K562 (cell line): ENCODE measurements at regions of chr15 and their contacts with region 1.

Region 1: GRCh38 chr15:68806220-68807060 is 14.3 kb downstream of the ANP32A start:
- DNase-seq: no peak
- ATAC-seq: no peak; the same call in 2 of the 3 replicates
- H3K4me3 ChIP-seq: no peak overlapping the region
- H3K27ac ChIP-seq: no peak overlapping the region
- H3K4me1 ChIP-seq: peaks cover 10% of the 10 kb centered on the region in 2 experiments; a peak in 4 of 5 replicates
- H3K27me3 ChIP-seq: no peaks in the 10 kb centered on the region
- CTCF ChIP-seq: no peak
- EP300 ChIP-seq: no peak
- POLR2A ChIP-seq: no peak
- RAD21 ChIP-seq: no peak

Region 2: DNA sequence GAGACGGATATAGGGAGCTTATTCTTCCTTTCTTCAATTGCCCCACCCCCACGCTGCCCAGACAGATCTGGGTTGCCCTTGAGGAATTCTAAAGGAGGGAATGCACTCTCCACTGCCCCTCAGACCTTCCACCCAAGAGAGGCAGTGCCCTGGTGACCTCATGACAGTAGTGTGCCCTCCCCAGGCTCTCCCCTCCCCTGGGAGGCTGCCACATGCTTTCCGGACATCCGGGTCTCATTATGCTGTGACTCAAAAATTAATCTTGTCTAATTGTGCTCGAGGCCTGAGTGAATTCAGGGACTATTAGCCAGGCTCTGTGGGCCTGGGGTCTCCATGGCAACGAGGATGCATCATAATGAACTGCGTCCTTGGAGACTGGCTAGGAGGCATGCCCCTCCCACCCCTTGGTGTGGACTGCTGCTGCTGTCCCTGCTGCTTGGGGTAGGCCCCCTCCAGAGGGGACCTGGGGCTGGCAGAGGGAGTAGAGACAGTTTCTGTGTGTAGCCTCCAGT is 206.8 kb before region 1 on chr15:
- CTCF ChIA-PET with region 1: no interaction called
- POLR2A ChIA-PET with region 1: no interaction called
- in situ Hi-C with region 1: no loop called
- intact Hi-C with region 1: no loop called
- DNase-seq: no peak
- ATAC-seq: no peak
- H3K4me3 ChIP-seq: no peak overlapping the region
- H3K27ac ChIP-seq: no peak overlapping the region
- H3K4me1 ChIP-seq: no peaks in the 10 kb centered on the region
- H3K27me3 ChIP-seq: peaks cover 10 to 69% of the 10 kb centered on the region in 2 experiments; a peak in 4 of 5 replicates
- CTCF ChIP-seq: no peak
- EP300 ChIP-seq: no peak
- POLR2A ChIP-seq: no peak
- RAD21 ChIP-seq: no peak

Region 3: DNA sequence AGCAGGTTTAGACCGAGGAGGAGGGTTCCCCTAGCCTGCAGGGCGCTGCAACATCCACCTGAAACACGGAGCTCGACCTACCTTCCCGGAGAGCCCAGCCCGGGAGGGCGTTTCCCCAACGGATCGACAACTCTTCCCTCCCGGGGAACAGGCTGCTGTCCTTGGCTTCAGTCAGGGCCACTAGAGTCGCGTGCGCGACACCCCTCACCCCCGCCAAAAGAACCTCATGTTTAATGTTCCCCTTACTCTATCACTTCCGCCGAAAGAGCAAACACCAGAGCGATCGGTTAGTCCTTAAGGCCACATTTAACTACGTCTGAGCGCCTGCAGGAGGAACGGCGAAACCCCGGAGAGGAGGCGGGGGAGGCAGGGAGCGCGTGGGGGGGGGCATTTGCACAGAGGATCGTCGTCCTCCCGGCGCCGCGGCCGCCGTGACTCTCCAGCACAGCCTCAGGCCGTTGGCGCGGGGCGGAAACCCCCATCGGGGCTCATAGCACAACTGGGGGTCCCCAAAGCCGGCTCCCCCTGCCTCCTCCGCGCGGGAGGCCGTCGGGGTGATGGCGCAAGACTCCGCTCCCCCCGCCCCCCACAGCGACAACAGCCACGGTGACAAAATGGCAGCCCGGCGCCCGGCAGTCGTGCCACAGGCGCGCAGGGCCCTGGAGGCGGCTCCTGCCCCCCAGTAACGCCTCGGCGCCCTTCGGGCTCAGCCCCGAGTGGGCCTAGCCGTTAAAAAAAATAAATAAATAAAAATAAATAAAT is 11.0 kb after region 1 on chr15:
- CTCF ChIA-PET with region 1: no interaction called
- POLR2A ChIA-PET with region 1: interaction called, 13 read pairs
- in situ Hi-C with region 1: no loop called
- intact Hi-C with region 1: no loop called
- DNase-seq: peak; percentile 59 to 78 (median 62)
- ATAC-seq: peak; percentile 39
- H3K4me3 ChIP-seq: peak overlapping the region; percentile 63
- H3K27ac ChIP-seq: peak overlapping the region; percentile 99
- H3K4me1 ChIP-seq: peaks cover 28 to 31% of the 10 kb centered on the region in 2 experiments
- H3K27me3 ChIP-seq: no peaks in the 10 kb centered on the region
- CTCF ChIP-seq: no peak
- EP300 ChIP-seq: no peak
- POLR2A ChIP-seq: peak; percentile 53
- RAD21 ChIP-seq: no peak